GM23248 (cell line): ENCODE measurements at regions of chr11 and their contacts with region 1.

Region 1: GRCh38 chr11:87352759-87353707 is 315.3 kb downstream of the TMEM135 start:
- DNase-seq: peak; percentile 91
- H3K4me3 ChIP-seq: peak overlapping the region; percentile 61
- H3K27ac ChIP-seq: 0 out of 2 replicates have a peak overlapping the region, but pooled peaks have one; percentile 26
- H3K4me1 ChIP-seq: peaks cover 8% of the 10 kb centered on the region; the same call in 1 of the 2 replicates
- H3K27me3 ChIP-seq: no peaks in the 10 kb centered on the region

Region 2: DNA sequence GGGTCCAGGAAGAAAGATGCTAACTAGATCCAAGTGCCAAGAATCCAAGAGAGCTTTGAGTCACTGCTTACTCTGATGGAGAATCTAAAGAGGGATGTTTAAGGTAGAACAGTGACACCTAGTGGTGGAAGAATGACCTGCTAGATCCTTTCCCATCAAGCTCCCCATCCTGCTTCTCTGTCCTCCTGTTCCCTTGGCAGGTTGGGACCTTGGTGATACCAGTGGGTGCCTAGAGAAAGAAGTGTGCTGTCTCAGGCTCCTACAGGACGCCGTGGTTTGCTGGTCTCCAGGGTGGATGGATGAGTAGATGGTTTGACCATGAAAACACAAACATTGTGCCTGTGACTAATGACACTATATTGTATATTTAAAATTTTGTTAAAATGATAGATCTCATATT is 68.4 kb after region 1 on chr11:
- in situ Hi-C with region 1: loop called (anchors 5 kb)
- DNase-seq: peak; percentile 90
- H3K4me3 ChIP-seq: no peak overlapping the region
- H3K27ac ChIP-seq: no peak overlapping the region
- H3K4me1 ChIP-seq: peaks cover 44% of the 10 kb centered on the region
- H3K27me3 ChIP-seq: no peaks in the 10 kb centered on the region

Region 3: DNA sequence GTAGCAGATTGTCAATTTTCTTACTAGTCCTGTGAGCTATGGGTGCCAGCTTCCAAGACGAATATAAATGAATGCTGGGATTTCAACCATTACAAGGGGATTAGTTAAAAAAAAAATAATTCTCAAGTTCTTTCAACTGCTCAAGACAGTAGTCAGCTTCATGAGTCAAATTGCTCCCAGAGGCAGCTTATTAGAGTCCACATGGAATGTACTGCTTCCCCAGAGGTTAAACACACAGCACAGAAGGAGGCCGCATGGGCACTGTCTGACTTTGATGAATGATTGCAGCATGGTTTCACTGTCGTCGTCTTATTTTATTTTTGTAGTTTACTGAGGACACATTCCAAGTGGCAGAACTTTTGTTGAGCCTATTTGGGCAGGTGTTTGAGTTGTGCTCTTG is 247.9 kb after region 1 on chr11:
- in situ Hi-C with region 1: no loop called
- DNase-seq: peak; percentile 1
- H3K4me3 ChIP-seq: no peak overlapping the region
- H3K27ac ChIP-seq: no peak overlapping the region
- H3K4me1 ChIP-seq: no peaks in the 10 kb centered on the region
- H3K27me3 ChIP-seq: no peaks in the 10 kb centered on the region